Activated B cell treated with CpG ODN at 0.5 μM for 24 hours (primary cell): ENCODE measurements at regions of chr15 and their contacts with region 1.

Region 1: DNA sequence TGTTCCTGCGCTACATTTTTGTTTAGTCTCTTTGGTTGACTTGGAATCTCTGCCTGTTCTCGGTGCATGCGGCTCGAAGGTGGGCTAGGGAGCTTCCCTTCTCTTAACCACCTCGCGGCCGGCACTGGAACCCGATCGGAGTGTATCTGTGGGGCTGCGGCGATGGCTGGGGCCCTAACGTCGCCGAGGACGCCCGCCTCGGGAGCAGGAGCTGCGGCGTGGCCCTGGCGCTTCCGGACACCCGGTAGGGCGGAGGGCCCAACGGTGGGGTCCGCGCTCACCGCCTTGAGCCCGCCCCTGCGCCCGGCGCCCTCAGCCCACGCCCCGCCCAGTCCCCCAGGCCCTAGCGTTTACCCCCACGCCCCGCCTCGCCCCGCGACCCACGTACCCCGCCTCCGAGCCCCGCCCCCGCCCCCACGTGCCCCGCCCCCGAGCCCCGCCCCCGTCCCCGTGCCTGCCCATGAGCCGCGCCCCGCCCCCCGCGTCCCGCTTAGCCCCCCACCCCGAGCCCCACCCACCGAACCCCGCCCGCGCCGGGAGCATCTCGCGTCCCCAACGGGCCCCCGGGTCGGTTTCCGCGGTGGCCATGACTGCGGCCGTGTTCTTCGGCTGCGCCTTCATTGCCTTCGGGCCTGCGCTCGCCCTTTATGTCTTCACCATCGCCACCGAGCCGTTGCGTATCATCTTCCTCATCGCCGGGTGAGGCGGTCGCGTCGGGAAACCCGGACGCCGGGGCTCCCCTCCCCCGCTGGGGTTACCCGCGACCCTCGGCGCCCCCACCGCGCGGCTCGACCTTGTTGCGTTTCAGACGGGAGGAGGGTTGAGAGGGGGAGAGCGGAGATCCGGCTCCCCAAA is at the start of gene APH1B:
- DNase-seq: peak; percentile 82
- ATAC-seq: peak; percentile 96
- H3K4me3 Mint-ChIP-seq: peak within 1 kb of the TSS; percentile 90
- H3K27ac Mint-ChIP-seq: peak within 1 kb of the TSS; percentile 89
- H3K4me1 Mint-ChIP-seq: peaks cover 21% of the 10 kb centered on the region
- H3K27me3 Mint-ChIP-seq: no peaks in the 10 kb centered on the region
- CTCF ChIP-seq: no peak
- total RNA-seq, gene APH1B: 22.1 and 23.7 TPM in 2 replicates

Region 2: GRCh38 chr15:63122002-63122893 is 155.0 kb before region 1 on chr15:
- CTCF ChIA-PET with region 1: no interaction called
- POLR2A ChIA-PET with region 1: interaction called, 6 read pairs
- intact Hi-C with region 1: loop called (anchors 1 kb)
- DNase-seq: peak; percentile 77
- ATAC-seq: peak; percentile 88
- H3K4me3 Mint-ChIP-seq: peak overlapping the region; percentile 86
- H3K27ac Mint-ChIP-seq: peak overlapping the region; percentile 86
- H3K4me1 Mint-ChIP-seq: peaks cover 15% of the 10 kb centered on the region
- H3K27me3 Mint-ChIP-seq: no peaks in the 10 kb centered on the region
- CTCF ChIP-seq: no peak

Region 3: GRCh38 chr15:63203451-63204090 is 73.7 kb before region 1 on chr15:
- CTCF ChIA-PET with region 1: interaction called, 4 read pairs
- POLR2A ChIA-PET with region 1: interaction called, 5 read pairs
- intact Hi-C with region 1: loop called (anchors 2 kb)
- DNase-seq: no peak
- ATAC-seq: peak; percentile 99
- H3K4me3 Mint-ChIP-seq: no peak overlapping the region
- H3K27ac Mint-ChIP-seq: peak overlapping the region; percentile 73
- H3K4me1 Mint-ChIP-seq: peaks cover 85% of the 10 kb centered on the region
- H3K27me3 Mint-ChIP-seq: no peaks in the 10 kb centered on the region
- CTCF ChIP-seq: no peak

Region 4: DNA sequence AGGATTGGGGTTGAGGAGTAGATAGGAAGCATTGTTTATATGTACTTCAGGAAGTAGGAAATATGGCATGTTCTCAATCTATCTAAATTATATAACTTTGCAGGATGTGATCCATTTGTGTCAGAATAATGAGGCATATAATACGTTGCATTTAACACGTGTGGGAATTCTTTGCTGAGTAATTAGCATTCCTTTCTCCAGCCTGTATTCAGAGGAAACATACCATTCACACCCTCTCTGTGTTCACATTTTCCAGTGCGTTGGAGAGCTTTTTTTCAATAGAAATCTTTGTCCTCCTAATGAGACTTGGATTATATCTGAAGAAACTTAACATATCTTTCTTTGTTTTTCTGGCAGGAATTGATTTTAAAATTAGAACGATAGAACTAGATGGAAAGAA is 32.9 kb before region 1 on chr15:
- CTCF ChIA-PET with region 1: no interaction called
- POLR2A ChIA-PET with region 1: no interaction called
- intact Hi-C with region 1: loop called (anchors 5 kb)
- DNase-seq: no peak
- ATAC-seq: no peak
- H3K4me3 Mint-ChIP-seq: no peak overlapping the region
- H3K27ac Mint-ChIP-seq: peak overlapping the region; percentile 46
- H3K4me1 Mint-ChIP-seq: peaks cover 34% of the 10 kb centered on the region
- H3K27me3 Mint-ChIP-seq: no peaks in the 10 kb centered on the region
- CTCF ChIP-seq: no peak